Ascending aorta (tissue), 2 donors: ENCODE measurements at regions of chr20 and their contacts with region 1.

Region 1: GRCh38 chr20:62900052-62900691 is 26.1 kb downstream of the DIDO1 start:
- DNase-seq: peak; percentile 23 to 85
- H3K4me3 ChIP-seq: no peak overlapping the region
- H3K27ac ChIP-seq: no peak overlapping the region
- H3K4me1 ChIP-seq: peaks cover 8 to 26% of the 10 kb centered on the region in 2 donors
- H3K27me3 ChIP-seq: no peaks in the 10 kb centered on the region
- CTCF ChIP-seq: peak; percentile 88 to 95 (median 93)

Region 2: DNA sequence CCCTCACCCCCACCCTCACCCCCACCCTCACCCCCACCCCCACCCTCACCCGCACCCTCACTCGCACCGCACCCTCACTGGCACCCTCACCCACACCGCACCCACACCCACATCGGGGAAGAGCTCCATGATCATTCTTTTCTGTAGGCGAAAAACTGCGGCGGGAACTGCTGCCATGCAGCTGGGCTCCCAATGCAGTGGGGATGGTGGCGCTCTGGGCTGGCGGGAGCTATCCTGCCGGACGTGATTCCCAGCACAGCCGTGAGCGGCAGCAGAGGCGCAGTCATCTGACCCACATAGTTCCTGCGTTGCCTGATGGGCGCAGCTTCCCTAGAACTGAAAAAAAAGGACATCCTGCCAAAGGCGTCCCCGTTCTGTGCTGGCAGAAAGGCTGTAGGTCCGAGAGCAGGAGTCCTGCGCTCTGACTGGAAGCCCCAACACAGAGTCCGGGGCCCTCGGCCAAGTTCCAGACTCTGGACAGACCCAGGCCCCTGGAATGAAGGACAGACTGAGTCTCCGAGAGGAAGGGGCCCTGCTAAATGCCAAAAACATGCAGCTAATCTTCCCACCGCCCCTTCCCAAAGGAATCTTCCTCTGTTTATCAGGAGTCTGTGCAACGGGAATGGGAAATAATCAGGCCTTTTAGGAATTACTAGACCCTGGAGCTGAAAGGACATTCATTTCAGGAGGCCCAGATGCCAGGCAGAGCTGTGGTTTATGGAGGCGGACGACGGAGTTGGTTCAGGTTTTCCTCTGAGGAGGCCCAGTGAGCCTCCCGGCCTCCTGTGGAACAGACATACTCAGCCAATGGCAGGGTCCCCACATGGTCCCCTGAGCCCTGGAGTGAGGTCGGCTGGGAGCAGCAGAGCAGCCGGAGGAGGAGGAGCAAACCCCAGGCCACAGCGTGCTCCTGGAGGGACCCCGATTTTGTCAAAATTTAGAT is 24.5 kb before region 1 on chr20:
- intact Hi-C with region 1: loop called (anchors 2 kb)
- DNase-seq: peak; percentile 37 to 91
- H3K4me3 ChIP-seq: peak overlapping the region in 1 of 2 donors; percentile 29
- H3K27ac ChIP-seq: peak overlapping the region; percentile 79 to 87
- H3K4me1 ChIP-seq: peaks cover 9 to 14% of the 10 kb centered on the region in 2 donors
- H3K27me3 ChIP-seq: no peaks in the 10 kb centered on the region
- CTCF ChIP-seq: peak; percentile 26 to 63 (median 58)

Region 3: DNA sequence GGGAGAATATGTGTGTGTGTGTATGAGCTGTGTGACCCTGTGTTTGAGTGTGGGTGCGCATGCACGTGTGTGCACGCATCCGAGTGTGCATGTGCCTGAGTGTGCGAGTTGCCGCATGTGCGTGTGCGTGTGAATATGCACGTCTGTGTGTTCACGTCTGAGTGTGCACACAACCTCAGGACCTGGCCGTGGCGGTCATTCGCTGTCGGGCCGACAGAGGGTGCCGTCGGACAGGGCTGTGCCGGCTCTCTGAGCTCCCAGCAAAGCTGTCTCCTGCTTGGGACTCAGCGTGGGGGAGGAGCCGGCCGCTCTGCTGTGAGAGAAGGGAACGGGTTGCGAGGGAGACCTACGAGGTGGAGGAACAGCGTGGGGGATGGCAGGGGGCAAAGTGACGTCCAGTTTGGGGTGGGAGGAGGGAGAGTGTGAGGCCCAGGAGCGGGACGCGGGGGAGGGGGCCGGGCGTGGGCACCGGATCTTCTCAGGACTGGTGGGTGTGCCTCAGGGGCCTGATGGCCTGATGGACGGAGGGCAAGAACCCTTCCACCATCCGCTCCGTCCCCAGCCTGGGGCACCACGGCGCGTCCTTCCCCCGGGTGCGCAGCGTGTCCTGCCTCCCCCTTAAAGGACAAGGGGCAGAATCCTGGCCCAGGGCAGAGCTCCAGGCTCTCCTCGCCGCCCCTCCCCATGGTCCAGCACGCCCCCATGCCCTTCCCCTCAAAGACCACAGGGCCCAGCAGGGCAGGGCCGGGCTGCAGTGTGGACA is 72.3 kb after region 1 on chr20:
- intact Hi-C with region 1: loop called (anchors 2 kb)
- DNase-seq: peak; percentile 33 to 90
- H3K4me3 ChIP-seq: peak overlapping the region; percentile 18 to 49
- H3K27ac ChIP-seq: no peak overlapping the region
- H3K4me1 ChIP-seq: peaks cover 0 to 2% of the 10 kb centered on the region in 2 donors
- H3K27me3 ChIP-seq: no peaks in the 10 kb centered on the region
- CTCF ChIP-seq: peak; percentile 86 to 90 (median 90)